ENCODE measurements at regions of chr5 and their contacts with region 1.

Region 1: GRCh38 chr5:115544436-115545350 is at the start of gene FEM1C:
- DNase-seq: peak; percentile 98 to 99 (median 98)
- ATAC-seq: peak; percentile 98 to 99 (median 98)
- H3K4me3 ChIP-seq: peak within 1 kb of the TSS; percentile 61 to 98 (median 89)
- H3K27ac ChIP-seq: peak within 1 kb of the TSS; percentile 78 to 99 (median 97)
- H3K4me1 ChIP-seq: peaks cover 0 to 42% (median 21%) of the 10 kb centered on the region in 12 donors
- H3K27me3 ChIP-seq: no peaks in the 10 kb centered on the region
- CTCF ChIP-seq: no peak
- POLR2A ChIP-seq: peak; percentile 99 to 100
- total RNA-seq, gene FEM1C: 37.5 to 92.7 (median 48.9) TPM

Region 2: DNA sequence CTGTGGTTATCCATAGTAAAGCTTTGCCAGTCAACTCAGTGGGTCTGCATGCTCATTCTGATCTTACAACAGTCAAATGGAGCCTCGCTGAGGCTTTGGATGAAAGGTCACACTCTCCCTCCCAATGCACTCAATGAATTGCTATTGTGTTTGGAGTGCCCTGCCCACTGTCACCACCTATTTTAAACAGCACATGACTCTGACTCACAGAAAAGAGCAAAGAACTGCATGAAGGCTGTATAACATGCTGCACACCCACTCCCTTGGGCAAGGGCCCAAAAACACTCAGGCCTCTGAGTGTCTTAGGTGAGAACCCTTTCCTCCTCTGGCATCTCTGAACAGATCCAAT is 129.6 kb before region 1 on chr5:
- intact Hi-C with region 1: loop called in 5 of 10 experiments (anchors 2 to 5 kb)
- DNase-seq: peak in 4 of 5 donors; percentile 40 to 70 (median 49)
- ATAC-seq: peak; percentile 24 to 84 (median 80)
- H3K4me3 ChIP-seq: no peak overlapping the region
- H3K27ac ChIP-seq: peak overlapping the region in 5 of 12 donors; percentile 3 to 68 (median 27)
- H3K4me1 ChIP-seq: peaks cover 0 to 33% (median 18%) of the 10 kb centered on the region in 12 donors
- H3K27me3 ChIP-seq: no peaks in the 10 kb centered on the region
- CTCF ChIP-seq: no peak
- POLR2A ChIP-seq: no peak

Region 3: GRCh38 chr5:115423541-115423940 is 121.2 kb before region 1 on chr5:
- intact Hi-C with region 1: loop called in 8 of 10 experiments (anchors 2 to 5 kb)
- DNase-seq: peak; percentile 82 to 89 (median 85)
- ATAC-seq: peak; percentile 93 to 97 (median 95)
- H3K4me3 ChIP-seq: peak overlapping the region in 8 of 12 donors; percentile 5 to 34 (median 16)
- H3K27ac ChIP-seq: peak overlapping the region; percentile 67 to 97 (median 89)
- H3K4me1 ChIP-seq: peaks cover 4 to 63% (median 42%) of the 10 kb centered on the region in 12 donors
- H3K27me3 ChIP-seq: no peaks in the 10 kb centered on the region
- CTCF ChIP-seq: no peak
- POLR2A ChIP-seq: peak in 1 of 2 donors; percentile 57

Region 4: GRCh38 chr5:115429343-115429940 is 115.3 kb before region 1 on chr5:
- intact Hi-C with region 1: loop called in 7 of 10 experiments (anchors 2 to 5 kb)
- DNase-seq: no peak
- ATAC-seq: no peak
- H3K4me3 ChIP-seq: no peak overlapping the region
- H3K27ac ChIP-seq: no peak overlapping the region
- H3K4me1 ChIP-seq: peaks cover 0 to 27% (median 14%) of the 10 kb centered on the region in 12 donors
- H3K27me3 ChIP-seq: no peaks in the 10 kb centered on the region
- CTCF ChIP-seq: no peak
- POLR2A ChIP-seq: no peak

Region 5: DNA sequence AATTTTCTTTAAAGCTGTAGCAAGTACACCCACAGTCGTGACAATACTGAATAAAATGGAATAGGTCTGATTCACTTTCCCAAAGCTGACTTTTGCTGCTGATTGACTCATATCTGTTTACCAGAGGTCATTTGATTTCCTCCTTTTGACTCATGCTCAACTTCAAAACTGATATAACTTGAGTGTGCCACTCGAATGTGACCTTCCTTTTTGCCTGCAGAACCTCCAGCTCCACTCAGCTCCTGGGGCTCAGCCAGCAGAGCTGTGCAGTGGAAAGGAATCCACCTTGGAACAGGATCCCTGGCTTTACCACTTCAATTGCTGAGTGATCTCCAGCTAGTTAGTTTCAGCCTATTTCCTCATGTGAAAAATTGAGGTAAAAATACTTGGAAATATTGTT is 84.2 kb before region 1 on chr5:
- intact Hi-C with region 1: loop called in 4 of 10 experiments (anchors 2 to 5 kb)
- DNase-seq: peak; percentile 78 to 91 (median 80)
- ATAC-seq: peak; percentile 87 to 94 (median 92)
- H3K4me3 ChIP-seq: no peak overlapping the region
- H3K27ac ChIP-seq: peak overlapping the region; percentile 45 to 90 (median 82)
- H3K4me1 ChIP-seq: peaks cover 0 to 62% (median 42%) of the 10 kb centered on the region in 12 donors
- H3K27me3 ChIP-seq: no peaks in the 10 kb centered on the region
- CTCF ChIP-seq: no peak
- POLR2A ChIP-seq: no peak

Region 6: GRCh38 chr5:115601701-115602590 is 57.3 kb after region 1 on chr5 and contains the start of gene TICAM2:
- intact Hi-C with region 1: no loop called
- DNase-seq: peak; percentile 73 to 85 (median 78)
- ATAC-seq: peak; percentile 56 to 91 (median 80)
- H3K4me3 ChIP-seq: peak within 1 kb of the TSS; percentile 70 to 90 (median 84)
- H3K27ac ChIP-seq: peak within 1 kb of the TSS; percentile 84 to 97 (median 94)
- H3K4me1 ChIP-seq: peaks cover 6 to 52% (median 30%) of the 10 kb centered on the region in 12 donors
- H3K27me3 ChIP-seq: no peaks in the 10 kb centered on the region
- CTCF ChIP-seq: peak in 8 of 12 donors; percentile 17 to 55 (median 43)
- POLR2A ChIP-seq: peak in 1 of 2 donors; percentile 37
- total RNA-seq, gene TICAM2: 0.75 to 4.1 (median 2.1) TPM

Region 7: DNA sequence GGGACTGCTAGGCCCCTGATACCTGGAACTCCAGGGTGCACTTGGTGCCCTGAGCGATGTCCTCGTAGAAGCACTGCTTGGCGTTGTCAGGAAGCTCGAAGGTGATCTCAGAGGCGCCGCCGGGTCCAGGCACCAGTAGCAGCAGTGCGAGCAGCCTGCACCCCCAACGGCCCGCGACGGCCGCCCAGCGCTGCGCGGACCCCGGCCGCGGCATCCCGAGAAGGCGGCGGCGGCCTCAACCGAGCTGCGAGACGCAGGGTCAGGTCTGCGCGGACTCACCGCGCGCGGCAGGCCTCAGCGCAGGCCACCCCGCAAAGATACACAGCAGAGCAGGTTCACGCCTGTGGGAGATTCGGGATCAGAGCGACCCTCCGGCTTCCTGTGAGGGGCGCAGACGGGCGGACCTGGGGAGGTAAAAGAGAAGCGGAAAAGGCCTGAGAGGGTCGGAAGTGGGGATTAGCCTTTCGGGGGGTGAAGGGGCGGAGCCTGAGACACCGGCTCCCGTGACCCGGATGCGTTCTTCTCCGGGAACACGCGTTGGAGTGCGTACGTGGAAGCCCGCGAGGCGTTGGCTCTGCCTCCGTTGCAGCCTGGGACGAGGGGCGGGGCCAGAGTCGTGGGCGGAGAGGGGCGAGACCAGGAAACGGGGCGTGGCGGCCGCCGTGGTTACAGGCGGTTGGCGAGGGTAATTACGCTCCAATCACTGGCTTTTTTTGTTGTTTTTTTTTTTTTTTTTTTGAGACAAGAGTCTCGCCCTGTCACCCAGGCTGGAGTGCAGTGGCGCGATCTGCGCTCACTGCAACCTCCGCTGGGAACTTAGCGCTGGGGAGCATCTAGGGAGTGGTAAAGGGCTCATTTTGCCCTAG is 81.1 kb after region 1 on chr5 and contains the start of gene TMED7:
- intact Hi-C with region 1: loop called in 2 of 10 experiments (anchors 10 kb)
- DNase-seq: peak; percentile 100
- ATAC-seq: peak; percentile 99 to 100 (median 99)
- H3K4me3 ChIP-seq: peak within 1 kb of the TSS; percentile 65 to 98 (median 84)
- H3K27ac ChIP-seq: peak within 1 kb of the TSS; percentile 79 to 99 (median 94)
- H3K4me1 ChIP-seq: peaks cover 13 to 50% (median 39%) of the 10 kb centered on the region in 12 donors
- H3K27me3 ChIP-seq: no peaks in the 10 kb centered on the region
- CTCF ChIP-seq: peak in 3 of 12 donors; percentile 5 to 20 (median 13)
- POLR2A ChIP-seq: peak; percentile 39 to 97
- total RNA-seq, gene TMED7: 58.4 to 99.1 (median 82.3) TPM

Region 8: GRCh38 chr5:115841382-115842088 is 296.8 kb after region 1 on chr5 and contains the starts of genes AP3S1 and ATG12:
- intact Hi-C with region 1: loop called in 2 of 10 experiments (anchors 5 kb)
- DNase-seq: peak; percentile 92 to 95 (median 93)
- ATAC-seq: peak; percentile 91 to 97 (median 96)
- H3K4me3 ChIP-seq: peak within 1 kb of the TSS; percentile 73 to 97 (median 86)
- H3K27ac ChIP-seq: peak within 1 kb of the TSS; percentile 88 to 98 (median 96)
- H3K4me1 ChIP-seq: peaks cover 0 to 74% (median 60%) of the 10 kb centered on the region in 12 donors
- H3K27me3 ChIP-seq: no peaks in the 10 kb centered on the region
- CTCF ChIP-seq: no peak
- POLR2A ChIP-seq: peak in 1 of 2 donors; percentile 42
- total RNA-seq, gene AP3S1: 20.3 to 56.4 (median 46.6) TPM
- total RNA-seq, gene ATG12: 15.3 to 29.2 (median 20.8) TPM